ENCODE measurements at regions of chrX and their contacts with region 1.

Region 1: DNA sequence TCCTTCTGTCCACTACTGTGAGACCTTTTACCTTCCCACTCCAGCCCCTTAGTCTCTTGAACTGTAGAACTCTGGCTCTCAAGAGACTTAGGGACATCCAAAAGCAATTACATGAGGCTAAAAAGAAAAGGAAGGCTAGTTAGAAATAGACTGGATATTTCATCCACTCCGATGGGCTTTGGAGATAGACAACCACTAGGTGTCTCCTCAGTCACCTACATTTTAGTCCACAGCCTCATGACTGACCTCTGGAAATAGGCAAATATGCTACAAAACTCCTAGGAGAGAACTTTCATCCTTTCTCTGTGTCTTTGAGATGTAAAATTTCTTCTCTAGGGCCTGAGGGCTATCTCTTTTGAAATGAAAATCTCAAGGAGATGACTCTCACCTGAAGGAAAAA is 45.1 kb upstream of the LAMP2 start:
- DNase-seq: no peak
- ATAC-seq: no peak
- H3K4me3 ChIP-seq: no peak overlapping the region
- H3K27ac ChIP-seq: no peak overlapping the region
- H3K4me1 ChIP-seq: no peaks in the 10 kb centered on the region
- H3K27me3 ChIP-seq: no peaks in the 10 kb centered on the region
- CTCF ChIP-seq: no peak
- POLR2A ChIP-seq: no peak

Region 2: GRCh38 chrX:120334151-120334550 is 180.1 kb before region 1 on chrX:
- in situ Hi-C with region 1: no loop called
- intact Hi-C with region 1: no loop called
- DNase-seq: no peak
- ATAC-seq: peak in 1 of 2 donors; percentile 49
- H3K4me3 ChIP-seq: no peak overlapping the region
- H3K27ac ChIP-seq: no peak overlapping the region
- H3K4me1 ChIP-seq: no peaks in the 10 kb centered on the region
- H3K27me3 ChIP-seq: peaks cover 0 to 4% (median 0%) of the 10 kb centered on the region in 3 donors
- CTCF ChIP-seq: peak in 1 of 5 experiments; percentile 43
- POLR2A ChIP-seq: no peak

Region 3: GRCh38 chrX:120664081-120664480 is 149.8 kb after region 1 on chrX:
- in situ Hi-C with region 1: loop called in 1 of 4 experiments (anchors 10 kb)
- intact Hi-C with region 1: no loop called
- DNase-seq: no peak
- ATAC-seq: no peak
- H3K4me3 ChIP-seq: no peak overlapping the region
- H3K27ac ChIP-seq: no peak overlapping the region
- H3K4me1 ChIP-seq: no peaks in the 10 kb centered on the region
- H3K27me3 ChIP-seq: no peaks in the 10 kb centered on the region
- CTCF ChIP-seq: peak in 1 of 5 experiments; percentile 38
- POLR2A ChIP-seq: no peak

Region 4: GRCh38 chrX:120769576-120770341 is 255.5 kb after region 1 on chrX:
- in situ Hi-C with region 1: loop called in 1 of 4 experiments (anchors 25 kb)
- intact Hi-C with region 1: no loop called
- DNase-seq: no peak
- ATAC-seq: no peak
- H3K4me3 ChIP-seq: no peak overlapping the region
- H3K27ac ChIP-seq: no peak overlapping the region
- H3K4me1 ChIP-seq: no peaks in the 10 kb centered on the region
- H3K27me3 ChIP-seq: no peaks in the 10 kb centered on the region
- CTCF ChIP-seq: peak in 1 of 5 experiments; percentile 19
- POLR2A ChIP-seq: no peak

Measured in gastrocnemius medialis (tissue), 4 donors.